ENCODE measurements at regions of chrX and their contacts with region 1.

Region 1: DNA sequence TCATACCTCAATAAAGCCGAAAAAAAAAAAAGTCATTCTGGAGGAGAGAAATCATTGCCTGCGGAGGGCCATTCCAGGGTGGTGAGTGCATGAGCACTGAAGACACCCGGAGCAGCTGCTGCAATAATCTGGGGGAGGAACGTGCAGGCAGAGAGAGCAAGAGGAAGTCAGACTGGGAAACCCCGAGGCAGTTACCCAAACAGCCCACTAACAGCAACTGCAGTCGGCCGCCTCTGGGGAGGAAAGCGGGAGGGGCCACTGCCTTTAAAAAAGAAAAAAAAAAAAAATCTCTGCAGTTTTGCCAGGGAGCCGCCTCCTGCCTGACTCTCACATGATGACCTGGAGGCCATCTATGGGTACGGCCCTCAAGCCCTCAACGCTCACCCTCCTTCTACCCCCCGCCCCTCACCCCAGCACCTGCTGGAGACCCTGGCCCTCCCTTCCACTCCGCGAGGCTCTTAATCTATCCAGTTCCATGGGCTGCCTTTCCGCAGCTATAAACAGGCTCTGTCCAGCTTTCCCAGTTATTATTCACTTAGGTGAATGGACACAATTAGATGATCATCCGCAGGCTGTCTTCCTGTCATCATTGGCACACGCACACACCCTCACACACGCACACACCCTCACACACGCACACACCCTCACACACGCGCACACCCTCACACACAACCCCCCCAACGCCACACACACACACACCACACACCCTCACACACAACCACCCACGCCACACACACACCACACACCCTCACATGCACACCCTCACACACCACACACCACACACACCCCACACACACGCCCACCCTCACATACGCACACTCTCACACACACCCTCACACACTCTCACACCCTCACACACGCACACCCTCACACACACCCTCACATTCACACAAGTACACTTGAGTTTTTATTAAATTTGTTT is 3.4 kb upstream of the AVPR2 start:
- DNase-seq: peak; percentile 51
- H3K4me3 ChIP-seq: no peak overlapping the region
- H3K27ac ChIP-seq: peak overlapping the region in 1 of 4 donors; percentile 25
- H3K4me1 ChIP-seq: peaks cover 0 to 17% (median 6%) of the 10 kb centered on the region in 4 donors
- H3K27me3 ChIP-seq: no peaks in the 10 kb centered on the region
- CTCF ChIP-seq: no peak
- EP300 ChIP-seq: no peak
- POLR2A ChIP-seq: no peak

Region 2: DNA sequence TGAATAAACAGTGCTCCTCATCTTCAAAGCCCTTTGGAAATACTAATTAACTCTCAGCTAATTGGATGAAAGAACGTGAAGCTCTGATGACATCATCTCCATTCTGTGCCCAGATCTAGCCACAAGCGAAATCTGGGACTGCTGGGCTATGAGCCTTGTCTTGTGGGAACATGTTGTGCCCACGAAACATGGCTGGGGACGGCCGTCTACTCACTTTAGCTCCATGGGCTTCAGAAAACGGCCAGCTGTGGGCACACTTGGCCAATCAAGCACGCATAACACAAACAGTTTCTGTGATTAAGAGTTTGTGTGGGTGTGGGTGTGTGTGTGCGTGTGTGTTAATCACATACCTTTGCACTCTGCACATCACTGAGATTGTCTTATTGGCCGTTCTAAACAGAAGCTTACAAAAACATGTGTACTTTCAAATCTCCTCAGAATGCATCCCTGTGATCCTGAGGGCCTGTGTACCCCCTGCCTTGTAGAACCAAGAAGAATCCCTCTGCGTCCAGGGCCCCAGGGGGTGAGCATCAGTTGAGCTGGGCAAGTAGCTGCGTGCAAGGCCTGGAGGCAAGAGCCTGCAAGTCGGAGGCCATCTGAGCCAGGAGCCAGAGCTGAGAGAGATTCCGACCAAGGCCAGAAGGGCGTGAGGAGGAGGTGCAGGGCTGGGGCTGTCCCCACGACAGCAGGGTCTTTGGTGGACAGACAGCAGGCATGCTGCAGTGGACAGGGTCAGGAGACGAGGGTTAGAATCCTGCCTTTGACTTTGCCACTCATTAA is 1021.9 kb before region 1 on chrX:
- in situ Hi-C with region 1: no loop called
- intact Hi-C with region 1: loop called (anchors 5 kb)
- DNase-seq: no peak
- H3K4me3 ChIP-seq: no peak overlapping the region
- H3K27ac ChIP-seq: no peak overlapping the region
- H3K4me1 ChIP-seq: no peaks in the 10 kb centered on the region
- H3K27me3 ChIP-seq: no peaks in the 10 kb centered on the region
- CTCF ChIP-seq: no peak
- EP300 ChIP-seq: no peak
- POLR2A ChIP-seq: no peak

Region 3: DNA sequence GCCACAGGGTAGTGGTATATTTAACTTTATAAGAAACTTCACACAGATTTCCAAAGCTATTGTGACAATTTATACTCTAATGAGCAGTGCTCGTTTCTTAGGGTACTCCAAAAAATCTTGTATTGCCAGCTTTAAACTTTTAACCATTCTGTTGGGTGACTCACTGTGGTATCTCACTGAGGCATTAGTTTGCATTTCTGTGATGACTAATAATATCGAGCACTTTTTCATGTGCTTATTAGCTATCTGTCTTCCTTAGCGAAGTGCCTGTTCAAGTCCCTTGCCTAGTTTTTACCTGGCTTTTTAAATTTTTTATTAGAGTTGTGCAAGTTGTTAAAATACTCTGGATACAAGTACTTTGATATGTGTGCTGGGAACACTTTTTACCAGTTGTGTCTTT is 839.4 kb before region 1 on chrX:
- in situ Hi-C with region 1: no loop called
- intact Hi-C with region 1: no loop called
- DNase-seq: no peak
- H3K4me3 ChIP-seq: no peak overlapping the region
- H3K27ac ChIP-seq: no peak overlapping the region
- H3K4me1 ChIP-seq: peaks cover 0 to under 1% (median 0%) of the 10 kb centered on the region in 4 donors
- H3K27me3 ChIP-seq: no peaks in the 10 kb centered on the region
- CTCF ChIP-seq: no peak
- EP300 ChIP-seq: no peak
- POLR2A ChIP-seq: no peak

Region 4: DNA sequence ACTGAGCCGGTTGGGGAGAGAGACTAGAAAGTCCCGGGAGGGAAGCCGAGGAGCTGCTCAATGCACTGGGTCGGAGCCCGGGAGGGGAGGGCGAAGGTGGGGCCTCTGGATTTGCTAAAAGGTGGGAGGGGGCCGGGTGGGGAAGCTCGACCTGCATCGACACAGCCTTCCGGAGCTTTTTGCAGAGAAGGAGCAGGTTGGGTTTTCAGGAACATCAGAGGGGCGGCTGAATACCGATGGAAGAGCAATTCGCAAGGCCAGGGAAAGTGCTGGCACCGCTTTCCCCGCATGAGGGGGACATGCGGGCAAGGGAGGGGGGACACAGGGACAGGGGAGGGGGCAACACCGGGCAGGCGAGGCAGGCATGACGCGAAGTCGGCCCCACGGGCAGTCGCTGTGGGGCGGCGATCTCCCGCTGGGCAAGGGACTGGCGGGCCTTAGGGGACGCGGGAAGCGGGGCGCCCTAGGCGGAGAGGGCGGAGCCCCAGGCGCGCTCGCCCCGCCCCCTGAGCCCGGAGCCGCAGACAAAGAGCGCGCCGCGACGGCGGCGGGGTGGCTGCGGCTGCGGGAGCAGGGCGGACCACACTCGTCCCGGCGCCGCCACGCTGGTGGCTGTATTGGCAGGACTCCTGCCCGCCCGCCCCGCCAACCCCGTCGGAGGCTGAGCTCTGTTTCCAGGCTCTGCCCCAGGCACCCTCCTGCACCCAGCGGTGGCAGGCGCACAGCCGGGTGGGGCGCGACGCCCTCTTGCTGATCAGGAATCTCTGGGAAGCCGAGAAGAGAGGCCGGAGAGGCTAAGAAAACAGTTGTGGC is 82.3 kb before region 1 on chrX:
- in situ Hi-C with region 1: loop called in 1 of 4 experiments (anchors 25 kb)
- intact Hi-C with region 1: no loop called
- DNase-seq: peak; percentile 23
- H3K4me3 ChIP-seq: peak overlapping the region in 3 of 4 donors; percentile 33 to 52 (median 35)
- H3K27ac ChIP-seq: peak overlapping the region in 1 of 4 donors; percentile 45
- H3K4me1 ChIP-seq: peaks cover 0 to 9% (median 3%) of the 10 kb centered on the region in 4 donors
- H3K27me3 ChIP-seq: no peaks in the 10 kb centered on the region
- CTCF ChIP-seq: no peak
- EP300 ChIP-seq: no peak
- POLR2A ChIP-seq: no peak

Region 5: GRCh38 chrX:153875391-153876111 is 25.5 kb before region 1 on chrX:
- in situ Hi-C with region 1: no loop called
- intact Hi-C with region 1: no loop called
- DNase-seq: peak; percentile 54
- H3K4me3 ChIP-seq: no peak overlapping the region
- H3K27ac ChIP-seq: no peak overlapping the region
- H3K4me1 ChIP-seq: no peaks in the 10 kb centered on the region
- H3K27me3 ChIP-seq: peaks cover 11% of the 10 kb centered on the region
- CTCF ChIP-seq: no peak
- EP300 ChIP-seq: no peak
- POLR2A ChIP-seq: no peak

Region 6: DNA sequence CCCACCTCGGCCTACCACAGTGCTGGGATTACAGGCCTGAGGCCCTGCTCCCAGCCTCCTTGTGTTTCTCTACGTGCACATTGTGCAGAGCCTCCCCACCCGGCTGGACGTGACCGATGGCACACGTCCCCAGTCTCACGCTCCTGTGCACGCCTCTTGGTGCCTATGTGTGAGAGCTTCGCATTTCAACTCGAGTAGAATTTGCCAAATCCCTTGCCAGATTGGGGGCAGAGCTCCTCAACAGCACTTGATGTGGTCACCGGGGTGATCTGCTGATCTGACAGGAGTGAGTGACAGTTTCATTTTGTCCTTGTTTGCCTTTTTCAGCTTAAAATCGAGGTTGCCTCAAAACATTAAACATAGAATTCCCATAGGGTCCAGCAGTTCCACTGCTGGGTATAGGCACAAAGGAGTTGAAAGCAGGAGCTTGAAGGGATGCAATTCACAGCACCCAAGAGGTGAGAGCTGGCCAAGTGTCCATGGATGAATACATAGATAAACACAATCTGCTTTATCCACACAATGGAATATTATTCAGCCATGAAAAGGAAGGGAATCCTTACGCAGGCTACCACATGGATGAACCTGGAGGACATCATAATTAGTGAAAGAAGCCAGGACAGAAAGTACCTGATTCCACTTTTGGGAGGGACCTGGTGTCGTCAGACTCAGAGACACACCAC is 89.0 kb after region 1 on chrX:
- in situ Hi-C with region 1: no loop called
- intact Hi-C with region 1: no loop called
- DNase-seq: no peak
- H3K4me3 ChIP-seq: no peak overlapping the region
- H3K27ac ChIP-seq: no peak overlapping the region
- H3K4me1 ChIP-seq: peaks cover 0 to 10% (median 7%) of the 10 kb centered on the region in 4 donors
- H3K27me3 ChIP-seq: no peaks in the 10 kb centered on the region
- CTCF ChIP-seq: no peak
- EP300 ChIP-seq: no peak
- POLR2A ChIP-seq: no peak

Measured in transverse colon (tissue), 4 donors.